ENCODE measurements at regions of chrX and their contacts with region 1.

Region 1: GRCh38 chrX:81201671-81202455 is at the starts of genes HMGN5 and SH3BGRL:
- DNase-seq: peak; percentile 70 to 77 (median 76)
- H3K4me3 ChIP-seq: peak within 1 kb of the TSS; percentile 84 to 88
- H3K4me3 Mint-ChIP-seq: peak within 1 kb of the TSS; percentile 85 to 98 (median 94)
- H3K27ac ChIP-seq: peak within 1 kb of the TSS; percentile 74
- H3K27ac Mint-ChIP-seq: peak within 1 kb of the TSS; percentile 92 to 97 (median 94)
- H3K4me1 ChIP-seq: peaks cover 38% of the 10 kb centered on the region
- H3K4me1 Mint-ChIP-seq: peaks cover 22 to 68% (median 36%) of the 10 kb centered on the region in 4 donors
- H3K27me3 ChIP-seq: no peaks in the 10 kb centered on the region
- H3K27me3 Mint-ChIP-seq: no peaks in the 10 kb centered on the region
- total RNA-seq, gene HMGN5: 1.8 to 2.7 TPM
- total RNA-seq, gene SH3BGRL: 81.4 to 86.5 TPM

Region 2: GRCh38 chrX:80808160-80808735 is 393.6 kb before region 1 on chrX:
- CTCF ChIA-PET with region 1: interaction called, 4 read pairs
- POLR2A ChIA-PET with region 1: interaction called, 20 read pairs
- intact Hi-C with region 1: loop called (anchors 2 kb)
- DNase-seq: peak; percentile 77 to 85 (median 80)
- H3K4me3 ChIP-seq: peak overlapping the region; percentile 73 to 80
- H3K4me3 Mint-ChIP-seq: peak overlapping the region; percentile 89 to 97 (median 94)
- H3K27ac ChIP-seq: peak overlapping the region; percentile 88
- H3K27ac Mint-ChIP-seq: peak overlapping the region; percentile 94 to 98 (median 96)
- H3K4me1 ChIP-seq: peaks cover 44% of the 10 kb centered on the region
- H3K4me1 Mint-ChIP-seq: peaks cover 14 to 45% (median 26%) of the 10 kb centered on the region in 4 donors
- H3K27me3 ChIP-seq: no peaks in the 10 kb centered on the region
- H3K27me3 Mint-ChIP-seq: peaks cover 0 to 6% of the 10 kb centered on the region in 2 donors

Region 3: GRCh38 chrX:81355436-81355835 is 153.6 kb after region 1 on chrX:
- CTCF ChIA-PET with region 1: no interaction called
- POLR2A ChIA-PET with region 1: no interaction called
- intact Hi-C with region 1: no loop called
- DNase-seq: no peak
- H3K4me3 ChIP-seq: no peak overlapping the region
- H3K4me3 Mint-ChIP-seq: no peak overlapping the region
- H3K27ac ChIP-seq: no peak overlapping the region
- H3K27ac Mint-ChIP-seq: no peak overlapping the region
- H3K4me1 ChIP-seq: no peaks in the 10 kb centered on the region
- H3K4me1 Mint-ChIP-seq: no peaks in the 10 kb centered on the region
- H3K27me3 ChIP-seq: no peaks in the 10 kb centered on the region
- H3K27me3 Mint-ChIP-seq: no peaks in the 10 kb centered on the region

Measured in CD4-positive, alpha-beta memory T cell (primary cell).